Activated naive CD4-positive, alpha-beta T cell treated with anti-CD3 and anti-CD28 coated beads for 36 hours (primary cell): ENCODE measurements at regions of chr7 and their contacts with region 1.

Region 1: DNA sequence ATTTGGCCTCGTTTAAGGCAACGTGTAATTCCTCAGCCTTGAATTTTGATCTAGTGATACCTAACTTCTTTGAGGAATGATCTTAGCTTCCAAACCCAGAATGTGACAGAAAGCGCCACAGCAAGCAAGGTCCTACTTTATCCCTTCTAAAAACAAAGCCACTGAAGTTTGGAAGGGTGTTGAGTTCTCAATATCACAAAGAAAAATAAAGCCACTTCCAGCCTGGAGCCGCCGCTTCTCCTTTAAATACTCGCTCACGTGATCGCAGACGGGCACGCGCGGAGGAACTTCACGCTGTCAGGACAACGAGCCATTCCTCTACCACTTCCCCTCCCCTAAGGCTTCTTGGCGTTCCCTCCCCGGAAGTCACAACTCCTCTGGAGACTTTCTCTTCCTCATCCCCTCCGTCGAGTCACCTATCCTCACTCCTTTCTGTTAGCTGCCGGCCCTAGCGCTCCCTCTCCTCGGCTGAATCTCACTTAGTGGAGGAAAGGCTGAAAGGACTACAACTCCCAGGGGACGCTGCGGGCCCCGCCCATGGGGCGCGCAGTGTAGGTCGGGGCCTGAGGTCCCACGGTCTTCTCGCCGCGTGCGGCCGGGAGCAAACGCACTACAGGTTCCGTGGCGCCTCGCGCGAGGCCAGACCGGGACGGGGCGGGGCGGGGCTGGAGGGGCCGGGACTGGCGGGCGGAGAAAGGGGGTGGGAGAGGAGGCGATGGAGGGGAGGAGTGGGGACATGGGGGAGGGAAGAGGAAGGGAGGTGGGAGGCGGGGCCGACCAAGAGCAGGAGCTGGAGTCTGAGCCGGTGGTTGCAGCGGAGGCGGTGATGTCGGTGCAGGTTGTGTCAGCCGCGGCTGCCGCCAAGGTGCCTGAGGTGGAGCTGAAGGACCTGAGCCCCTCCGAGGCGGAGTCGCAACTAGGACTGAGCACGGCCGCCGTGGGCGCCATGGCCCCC is at the start of gene AHCYL2:
- DNase-seq: peak; percentile 99
- H3K4me3 Mint-ChIP-seq: peak within 1 kb of the TSS; percentile 88
- H3K27ac Mint-ChIP-seq: peak within 1 kb of the TSS; percentile 90
- H3K4me1 Mint-ChIP-seq: peaks cover 31% of the 10 kb centered on the region
- H3K27me3 Mint-ChIP-seq: no peaks in the 10 kb centered on the region
- total RNA-seq, gene AHCYL2: 29.1 to 30.4 TPM

Region 2: GRCh38 chr7:129054438-129055293 is 169.9 kb before region 1 on chr7 and contains the start of gene TNPO3:
- CTCF ChIA-PET with region 1: no interaction called
- intact Hi-C with region 1: loop called (anchors 1 kb)
- DNase-seq: peak; percentile 95
- H3K4me3 Mint-ChIP-seq: peak within 1 kb of the TSS; percentile 95
- H3K27ac Mint-ChIP-seq: peak within 1 kb of the TSS; percentile 99
- H3K4me1 Mint-ChIP-seq: peaks cover 35% of the 10 kb centered on the region
- H3K27me3 Mint-ChIP-seq: peaks cover 3% of the 10 kb centered on the region
- total RNA-seq, gene TNPO3: 65.7 to 66.4 TPM

Region 3: GRCh38 chr7:129122751-129123509 is 101.6 kb before region 1 on chr7:
- CTCF ChIA-PET with region 1: no interaction called
- intact Hi-C with region 1: no loop called
- DNase-seq: peak; percentile 74
- H3K4me3 Mint-ChIP-seq: no peak overlapping the region
- H3K27ac Mint-ChIP-seq: peak overlapping the region; percentile 73
- H3K4me1 Mint-ChIP-seq: peaks cover 24% of the 10 kb centered on the region
- H3K27me3 Mint-ChIP-seq: peaks cover 2% of the 10 kb centered on the region

Region 4: DNA sequence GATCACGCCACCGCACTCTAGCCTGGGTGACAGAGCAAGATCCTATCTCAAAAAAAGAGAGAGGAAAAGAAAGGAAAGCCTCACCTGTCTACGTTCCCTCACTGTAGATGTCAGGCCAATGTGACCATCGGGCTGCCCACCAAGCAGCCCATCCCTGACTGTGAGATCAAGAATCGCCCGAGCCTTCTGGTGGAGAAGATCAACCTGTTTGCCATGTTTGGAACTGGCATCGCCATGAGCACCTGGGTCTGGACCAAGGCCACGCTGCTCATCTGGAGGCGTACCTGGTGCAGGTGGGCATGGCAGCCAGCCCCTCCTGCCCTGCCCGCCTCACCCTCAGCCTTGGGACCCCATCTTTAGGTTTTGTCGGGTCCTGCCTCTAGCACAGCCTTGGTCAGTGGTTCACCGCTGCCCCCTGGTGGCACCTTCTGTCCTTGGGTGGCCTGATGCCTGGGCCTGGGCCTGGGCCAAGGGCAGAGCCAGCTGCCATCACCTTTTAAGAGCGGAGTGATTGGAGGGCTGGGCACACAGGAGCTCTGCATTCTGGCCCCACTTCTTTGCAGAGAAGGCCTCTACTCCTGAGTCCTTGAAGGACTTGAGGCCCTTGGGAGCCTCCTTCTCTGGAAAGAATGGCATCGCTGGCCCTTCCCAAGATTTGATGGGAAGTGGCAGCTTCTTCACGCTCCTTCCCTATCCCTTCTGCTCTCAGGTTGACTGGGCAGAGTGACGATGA is 14.1 kb before region 1 on chr7:
- CTCF ChIA-PET with region 1: interaction called, 11 read pairs
- intact Hi-C with region 1: no loop called
- DNase-seq: peak; percentile 86
- H3K4me3 Mint-ChIP-seq: no peak overlapping the region
- H3K27ac Mint-ChIP-seq: no peak overlapping the region
- H3K4me1 Mint-ChIP-seq: no peaks in the 10 kb centered on the region
- H3K27me3 Mint-ChIP-seq: no peaks in the 10 kb centered on the region

Region 5: GRCh38 chr7:129258649-129259389 is 34.3 kb after region 1 on chr7:
- CTCF ChIA-PET with region 1: interaction called, 5 read pairs
- intact Hi-C with region 1: loop called (anchors 1 kb)
- DNase-seq: no peak
- H3K4me3 Mint-ChIP-seq: no peak overlapping the region
- H3K27ac Mint-ChIP-seq: no peak overlapping the region
- H3K4me1 Mint-ChIP-seq: peaks cover 32% of the 10 kb centered on the region
- H3K27me3 Mint-ChIP-seq: no peaks in the 10 kb centered on the region

Region 6: DNA sequence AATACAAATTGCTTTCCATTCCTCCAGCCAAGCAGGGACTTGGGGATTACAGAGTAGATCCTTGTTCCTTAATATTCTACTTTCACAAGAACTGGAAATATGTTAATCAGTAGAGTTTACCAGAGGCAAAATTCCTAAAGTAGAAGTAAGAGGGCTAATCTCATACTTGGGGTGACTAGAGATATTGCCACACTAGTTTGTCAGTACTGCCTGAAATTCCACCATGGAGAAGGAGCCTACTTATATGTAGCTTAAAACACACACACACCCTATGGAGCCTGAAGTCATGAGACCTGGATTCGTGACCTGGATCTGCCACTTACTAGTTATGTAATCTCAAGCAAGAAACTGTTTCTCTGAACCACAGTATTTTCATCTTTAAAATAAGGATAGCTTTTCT is 243.6 kb after region 1 on chr7:
- CTCF ChIA-PET with region 1: interaction called, 3 read pairs
- intact Hi-C with region 1: loop called (anchors 2 kb)
- DNase-seq: no peak
- H3K4me3 Mint-ChIP-seq: no peak overlapping the region
- H3K27ac Mint-ChIP-seq: no peak overlapping the region
- H3K4me1 Mint-ChIP-seq: peaks cover 12% of the 10 kb centered on the region
- H3K27me3 Mint-ChIP-seq: no peaks in the 10 kb centered on the region

Region 7: DNA sequence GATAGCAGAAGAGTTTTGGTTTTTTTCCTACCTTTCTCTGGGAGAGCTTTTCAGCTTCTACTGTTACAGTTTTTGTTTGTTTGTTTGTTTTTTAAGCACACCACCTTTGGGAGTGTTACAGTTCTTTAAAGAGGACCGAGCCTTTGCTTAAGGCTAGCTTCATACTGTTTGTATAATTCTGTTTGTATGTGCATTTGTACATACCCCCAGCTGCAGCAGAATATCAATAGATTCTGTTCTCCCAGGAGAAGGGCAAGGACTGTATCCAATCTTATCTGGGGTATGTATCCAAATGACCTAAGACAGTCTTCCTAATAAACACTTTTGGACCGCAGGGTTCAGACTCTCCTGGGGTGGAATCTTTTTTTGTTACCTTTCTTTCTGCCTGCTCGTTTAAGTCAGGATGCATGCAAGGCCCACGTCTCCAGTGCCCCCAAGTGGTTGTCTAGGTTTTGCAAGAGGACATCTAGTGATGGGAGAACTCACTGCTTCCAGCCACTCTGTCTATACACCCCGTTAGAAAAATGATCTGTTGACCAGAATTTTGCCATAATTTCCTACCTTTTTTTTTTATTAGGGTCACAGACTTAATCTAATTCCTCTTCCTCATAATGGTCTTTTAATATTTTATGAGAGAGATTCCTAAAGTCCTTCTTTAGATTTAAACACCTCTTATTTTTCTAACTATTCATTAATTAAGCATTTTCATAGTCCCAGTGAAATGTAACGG is 410.9 kb after region 1 on chr7:
- CTCF ChIA-PET with region 1: no interaction called
- intact Hi-C with region 1: loop called (anchors 5 kb)
- DNase-seq: peak; percentile 89
- H3K4me3 Mint-ChIP-seq: no peak overlapping the region
- H3K27ac Mint-ChIP-seq: no peak overlapping the region
- H3K4me1 Mint-ChIP-seq: peaks cover 45% of the 10 kb centered on the region
- H3K27me3 Mint-ChIP-seq: no peaks in the 10 kb centered on the region

Region 8: GRCh38 chr7:129780257-129780973 is 555.9 kb after region 1 on chr7:
- CTCF ChIA-PET with region 1: no interaction called
- intact Hi-C with region 1: loop called (anchors 1 kb)
- DNase-seq: peak; percentile 91
- H3K4me3 Mint-ChIP-seq: peak overlapping the region; percentile 73
- H3K27ac Mint-ChIP-seq: no peak overlapping the region
- H3K4me1 Mint-ChIP-seq: peaks cover 40% of the 10 kb centered on the region
- H3K27me3 Mint-ChIP-seq: peaks cover 57% of the 10 kb centered on the region